ENCODE measurements at regions of chr6 and their contacts with region 1.

Region 1: GRCh38 chr6:100464903-100465700 is at the start of gene SIM1:
- DNase-seq: no peak
- ATAC-seq: peak; percentile 45
- H3K4me3 Mint-ChIP-seq: no peak within 1 kb of the TSS
- H3K27ac Mint-ChIP-seq: no peak within 1 kb of the TSS
- H3K4me1 Mint-ChIP-seq: peaks cover 25% of the 10 kb centered on the region
- H3K27me3 Mint-ChIP-seq: peaks cover 81% of the 10 kb centered on the region
- CTCF ChIP-seq: no peak
- total RNA-seq, gene SIM1: not detected

Region 2: DNA sequence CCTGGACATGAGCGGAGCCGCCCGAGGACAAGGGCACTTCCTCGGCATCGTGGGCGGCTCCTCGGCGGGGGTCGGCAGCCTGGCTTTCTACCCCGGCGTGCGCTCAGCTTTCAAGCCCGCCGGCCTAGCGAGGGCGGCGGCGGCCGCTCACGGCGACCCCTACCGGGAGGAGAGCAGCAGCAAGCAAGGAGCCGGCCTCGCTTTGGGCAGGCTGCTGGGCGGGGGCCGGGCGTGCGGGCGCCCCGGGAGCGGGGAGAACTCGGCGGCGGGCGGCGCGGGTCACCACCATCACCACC is 851.7 kb before region 1 on chr6:
- CTCF ChIA-PET with region 1: no interaction called
- POLR2A ChIA-PET with region 1: no interaction called
- intact Hi-C with region 1: loop called (anchors 5 kb)
- DNase-seq: peak; percentile 49
- ATAC-seq: peak; percentile 64
- H3K4me3 Mint-ChIP-seq: peak overlapping the region; percentile 66
- H3K27ac Mint-ChIP-seq: no peak overlapping the region
- H3K4me1 Mint-ChIP-seq: peaks cover 32% of the 10 kb centered on the region
- H3K27me3 Mint-ChIP-seq: peaks cover 74% of the 10 kb centered on the region
- CTCF ChIP-seq: no peak

Region 3: GRCh38 chr6:100447900-100448748 is 17.0 kb before region 1 on chr6:
- CTCF ChIA-PET with region 1: interaction called, 15 read pairs
- POLR2A ChIA-PET with region 1: interaction called, 3 read pairs
- intact Hi-C with region 1: no loop called
- DNase-seq: no peak
- ATAC-seq: no peak
- H3K4me3 Mint-ChIP-seq: no peak overlapping the region
- H3K27ac Mint-ChIP-seq: no peak overlapping the region
- H3K4me1 Mint-ChIP-seq: peaks cover 4% of the 10 kb centered on the region
- H3K27me3 Mint-ChIP-seq: peaks cover 50% of the 10 kb centered on the region
- CTCF ChIP-seq: no peak

Region 4: GRCh38 chr6:101401792-101402621 is 936.9 kb after region 1 on chr6:
- CTCF ChIA-PET with region 1: no interaction called
- POLR2A ChIA-PET with region 1: no interaction called
- intact Hi-C with region 1: loop called (anchors 10 kb)
- DNase-seq: no peak
- ATAC-seq: no peak
- H3K4me3 Mint-ChIP-seq: no peak overlapping the region
- H3K27ac Mint-ChIP-seq: no peak overlapping the region
- H3K4me1 Mint-ChIP-seq: no peaks in the 10 kb centered on the region
- H3K27me3 Mint-ChIP-seq: peaks cover 54% of the 10 kb centered on the region
- CTCF ChIP-seq: no peak